IMR-90 (cell line): ENCODE measurements at regions of chr16 and their contacts with region 1.

Region 1: GRCh38 chr16:25051406-25052150 is 36.4 kb upstream of the ARHGAP17 start:
- DNase-seq: peak; percentile 84
- ATAC-seq: no peak
- H3K4me3 ChIP-seq: no peak overlapping the region
- H3K27ac ChIP-seq: no peak overlapping the region
- H3K4me1 ChIP-seq: peaks cover 11% of the 10 kb centered on the region
- H3K27me3 ChIP-seq: no peaks in the 10 kb centered on the region
- CTCF ChIP-seq: no peak
- POLR2A ChIP-seq: 0 out of 2 replicates have a peak, but pooled peaks have one; percentile 31
- RAD21 ChIP-seq: no peak

Region 2: GRCh38 chr16:24915576-24915975 is 136.0 kb before region 1 on chr16:
- CTCF ChIA-PET with region 1: interaction called, 10 read pairs
- POLR2A ChIA-PET with region 1: no interaction called
- dilution Hi-C with region 1: no loop called
- in situ Hi-C with region 1: no loop called
- intact Hi-C with region 1: no loop called
- DNase-seq: no peak
- ATAC-seq: no peak
- H3K4me3 ChIP-seq: no peak overlapping the region
- H3K27ac ChIP-seq: no peak overlapping the region
- H3K4me1 ChIP-seq: no peaks in the 10 kb centered on the region
- H3K27me3 ChIP-seq: no peaks in the 10 kb centered on the region
- CTCF ChIP-seq: no peak
- POLR2A ChIP-seq: no peak
- RAD21 ChIP-seq: no peak

Region 3: GRCh38 chr16:24986512-24987303 is 64.9 kb before region 1 on chr16:
- CTCF ChIA-PET with region 1: interaction called, 3 read pairs
- POLR2A ChIA-PET with region 1: no interaction called
- dilution Hi-C with region 1: no loop called
- in situ Hi-C with region 1: no loop called
- intact Hi-C with region 1: loop called (anchors 2 kb)
- DNase-seq: peak; percentile 88
- ATAC-seq: peak; percentile 64
- H3K4me3 ChIP-seq: peak overlapping the region; percentile 3; the same call in 1 of the 2 replicates
- H3K27ac ChIP-seq: peak overlapping the region; percentile 97
- H3K4me1 ChIP-seq: peaks cover 35% of the 10 kb centered on the region
- H3K27me3 ChIP-seq: no peaks in the 10 kb centered on the region
- CTCF ChIP-seq: no peak
- POLR2A ChIP-seq: no peak; the same call in none of the 2 replicates
- RAD21 ChIP-seq: no peak

Region 4: GRCh38 chr16:25111403-25112166 is 60.0 kb after region 1 on chr16 and contains the start of gene LCMT1:
- CTCF ChIA-PET with region 1: no interaction called
- POLR2A ChIA-PET with region 1: interaction called, 6 read pairs
- dilution Hi-C with region 1: no loop called
- in situ Hi-C with region 1: no loop called
- intact Hi-C with region 1: loop called (anchors 1 kb)
- DNase-seq: peak; percentile 97
- ATAC-seq: peak; percentile 77
- H3K4me3 ChIP-seq: peak within 1 kb of the TSS; percentile 84
- H3K27ac ChIP-seq: peak within 1 kb of the TSS; percentile 78
- H3K4me1 ChIP-seq: peaks cover 3% of the 10 kb centered on the region
- H3K27me3 ChIP-seq: no peaks in the 10 kb centered on the region
- CTCF ChIP-seq: 0 out of 2 replicates have a peak, but pooled peaks have one; percentile 4
- POLR2A ChIP-seq: peak; percentile 63; the same call in 1 of the 2 replicates
- RAD21 ChIP-seq: no peak
- total RNA-seq, gene LCMT1: 60.0 and 60.4 TPM in 2 replicates

Region 5: DNA sequence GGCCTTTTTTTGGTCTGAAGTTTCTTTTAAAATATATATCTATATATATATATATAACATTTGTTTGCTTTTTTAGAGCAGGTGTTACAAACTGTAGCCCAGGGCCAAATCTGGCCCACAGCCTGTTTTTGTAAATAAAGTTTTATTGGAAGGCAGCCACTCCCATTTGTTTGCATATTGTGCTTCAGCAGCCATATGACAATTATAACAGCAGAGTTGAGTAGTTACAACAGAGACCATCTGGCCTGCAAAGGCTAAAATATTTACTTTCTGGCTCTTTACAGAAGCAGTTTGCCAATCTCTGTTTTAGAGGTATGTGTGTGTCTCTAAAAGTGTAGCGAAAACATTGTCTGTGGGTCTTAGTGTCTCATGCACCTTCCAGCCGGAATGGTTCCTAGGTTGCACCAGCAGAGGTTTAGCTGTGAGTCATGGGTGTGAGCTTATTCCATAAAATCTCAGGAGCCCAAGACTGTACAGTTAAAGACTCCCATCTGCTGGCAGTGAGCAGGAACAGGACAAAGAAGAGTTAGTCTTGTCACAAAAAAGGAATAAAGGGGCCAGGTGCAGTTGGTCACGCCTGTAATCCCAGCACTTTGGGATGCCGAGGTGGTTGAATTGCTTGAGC is 83.8 kb after region 1 on chr16:
- CTCF ChIA-PET with region 1: interaction called, 3 read pairs
- POLR2A ChIA-PET with region 1: no interaction called
- dilution Hi-C with region 1: no loop called
- in situ Hi-C with region 1: no loop called
- intact Hi-C with region 1: loop called (anchors 1 kb)
- DNase-seq: peak; percentile 83
- ATAC-seq: peak; percentile 97
- H3K4me3 ChIP-seq: no peak overlapping the region
- H3K27ac ChIP-seq: no peak overlapping the region
- H3K4me1 ChIP-seq: no peaks in the 10 kb centered on the region
- H3K27me3 ChIP-seq: no peaks in the 10 kb centered on the region
- CTCF ChIP-seq: peak; percentile 71
- POLR2A ChIP-seq: no peak
- RAD21 ChIP-seq: peak; percentile 81